ENCODE measurements at regions of chr17 and their contacts with region 1.

Region 1: DNA sequence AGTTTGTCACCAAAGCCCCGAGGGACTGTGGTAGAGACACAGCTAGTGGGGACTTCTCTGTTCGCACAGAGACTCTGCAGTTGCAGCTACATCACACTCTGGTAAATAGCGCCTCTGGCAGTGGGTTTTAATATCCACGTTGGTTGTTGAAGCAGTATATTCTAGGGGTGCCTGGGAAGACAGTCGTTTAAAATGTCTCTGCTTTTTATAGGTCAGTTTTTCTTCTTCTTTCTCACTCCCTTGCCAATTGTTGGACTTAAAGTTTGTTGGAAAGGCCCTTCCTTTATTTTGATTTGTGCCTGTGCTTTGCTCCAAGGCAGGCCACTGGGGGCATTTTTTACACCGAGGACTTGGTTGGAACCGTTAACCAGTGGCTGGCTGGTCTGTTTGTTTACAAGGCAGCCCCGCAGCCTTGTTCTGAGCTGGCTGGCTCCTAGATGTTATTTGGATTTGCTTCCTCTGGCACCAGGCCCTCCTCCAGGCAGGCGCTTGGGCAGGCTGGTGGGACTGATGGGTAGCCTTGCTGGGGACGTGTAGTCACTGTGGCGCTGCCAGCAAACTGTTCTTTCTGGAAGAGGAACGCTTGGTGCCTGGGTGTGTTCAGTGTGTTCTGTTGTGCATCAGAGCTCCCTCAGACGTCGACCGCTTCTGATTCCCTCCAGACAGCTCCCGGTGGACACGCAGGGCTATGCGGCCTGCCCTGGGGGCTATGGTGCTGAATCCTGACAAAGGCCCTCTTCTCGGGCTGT is 218.2 kb upstream of the CHMP6 start:
- DNase-seq: no peak
- H3K4me3 ChIP-seq: no peak overlapping the region
- H3K27ac ChIP-seq: peak overlapping the region; percentile 72 to 86 (median 80)
- H3K4me1 ChIP-seq: peaks cover 12 to 50% (median 34%) of the 10 kb centered on the region in 4 donors
- H3K27me3 ChIP-seq: no peaks in the 10 kb centered on the region
- CTCF ChIP-seq: peak in 1 of 3 experiments; percentile 27
- EP300 ChIP-seq: peak; percentile 79
- POLR2A ChIP-seq: no peak

Region 2: GRCh38 chr17:80832888-80833583 is 59.6 kb after region 1 on chr17:
- intact Hi-C with region 1: loop called (anchors 10 kb)
- DNase-seq: peak; percentile 96
- H3K4me3 ChIP-seq: peak overlapping the region; percentile 53 to 67 (median 58)
- H3K27ac ChIP-seq: peak overlapping the region; percentile 84 to 94 (median 86)
- H3K4me1 ChIP-seq: peaks cover 16 to 29% (median 23%) of the 10 kb centered on the region in 4 donors
- H3K27me3 ChIP-seq: no peaks in the 10 kb centered on the region
- CTCF ChIP-seq: no peak
- EP300 ChIP-seq: peak; percentile 6
- POLR2A ChIP-seq: peak; percentile 14

Measured in esophagus muscularis mucosa (tissue), 4 donors.